ENCODE measurements at regions of chr9 and their contacts with region 1.

Region 1: DNA sequence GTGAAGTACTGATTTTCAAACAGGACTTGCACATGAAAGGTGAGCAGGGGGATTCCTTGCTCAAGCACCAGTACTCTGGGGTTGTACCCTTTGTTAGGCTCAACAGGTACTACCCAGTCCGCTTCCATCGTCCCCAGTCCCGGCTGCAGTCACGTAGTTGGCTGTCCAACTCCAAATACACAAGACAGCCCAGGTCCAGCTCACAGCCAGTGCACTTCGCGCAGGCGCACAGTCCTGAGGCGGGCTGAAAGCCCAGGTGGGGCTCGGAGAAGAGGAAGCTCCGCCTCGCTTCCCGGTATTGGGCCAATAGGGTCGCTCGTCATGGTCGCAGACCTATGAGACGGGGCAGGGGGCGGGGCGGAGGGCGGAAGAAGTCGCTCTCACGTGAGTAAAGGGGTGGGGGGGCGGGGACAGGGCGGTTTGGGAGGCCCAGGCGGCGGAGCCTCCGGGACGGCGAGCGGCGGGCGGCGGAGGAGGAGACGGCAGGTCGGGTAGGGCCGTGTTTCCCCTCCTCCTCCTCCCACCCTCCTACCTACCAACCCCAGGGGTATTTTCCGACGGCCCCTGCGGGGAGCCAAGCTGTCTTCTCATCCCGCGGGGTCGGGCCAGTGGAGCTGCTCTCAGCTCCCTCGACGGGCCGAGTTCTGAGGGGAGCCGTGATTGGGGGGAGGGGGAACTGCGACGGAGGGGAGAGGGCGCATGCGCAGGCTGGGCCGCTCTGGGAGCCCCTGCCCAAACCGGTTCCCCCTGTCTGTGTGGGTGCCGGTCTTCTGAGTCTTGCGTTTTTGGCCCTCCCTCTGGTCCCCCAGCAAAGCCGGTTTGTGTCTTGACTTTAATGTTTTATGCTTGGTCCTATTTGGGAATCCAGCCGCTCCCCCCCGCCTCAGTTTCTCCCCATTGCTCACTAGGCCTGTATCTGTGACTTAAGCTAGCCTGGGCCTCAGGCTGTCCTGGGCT is at the start of gene RABGAP1:
- DNase-seq: peak; percentile 97
- ATAC-seq: peak; percentile 96
- H3K4me3 ChIP-seq: peak within 1 kb of the TSS; percentile 78 to 97 (median 90)
- H3K27ac ChIP-seq: peak within 1 kb of the TSS; percentile 77
- H3K4me1 ChIP-seq: peaks cover 65% of the 10 kb centered on the region
- H3K27me3 ChIP-seq: peaks cover 0 to 3% of the 10 kb centered on the region in 2 experiments; a peak in 1 of 5 replicates
- CTCF ChIP-seq: no peak
- EP300 ChIP-seq: no peak
- POLR2A ChIP-seq: peak; percentile 81 to 82
- RAD21 ChIP-seq: peak; percentile 42
- total RNA-seq, gene RABGAP1: 19.1 and 26.4 TPM in 2 replicates

Region 2: DNA sequence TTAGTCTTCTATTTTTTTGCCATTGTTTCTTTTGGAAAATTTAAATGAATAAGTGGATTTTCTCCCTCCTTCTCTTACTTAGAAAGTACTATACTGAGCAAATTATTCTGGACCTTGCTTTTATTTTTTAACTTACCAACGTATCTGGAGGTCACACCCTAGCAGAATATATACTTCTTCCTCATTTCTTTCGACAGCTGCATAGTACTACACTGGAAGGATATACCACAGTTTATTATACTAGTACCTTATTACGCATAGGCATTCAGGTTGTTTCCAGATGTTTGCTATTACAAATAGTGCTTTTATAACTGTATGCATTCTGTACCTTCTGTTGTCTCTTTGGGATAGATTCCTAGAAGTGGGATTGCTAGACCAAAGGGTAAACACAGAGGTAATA is 52.4 kb before region 1 on chr9:
- CTCF ChIA-PET with region 1: no interaction called
- POLR2A ChIA-PET with region 1: no interaction called
- in situ Hi-C with region 1: no loop called
- intact Hi-C with region 1: no loop called
- DNase-seq: no peak
- ATAC-seq: no peak
- H3K4me3 ChIP-seq: no peak overlapping the region
- H3K27ac ChIP-seq: no peak overlapping the region
- H3K4me1 ChIP-seq: no peaks in the 10 kb centered on the region
- H3K27me3 ChIP-seq: no peaks in the 10 kb centered on the region
- CTCF ChIP-seq: no peak
- EP300 ChIP-seq: no peak
- POLR2A ChIP-seq: no peak
- RAD21 ChIP-seq: no peak

Region 3: GRCh38 chr9:122904823-122905710 is 35.8 kb before region 1 on chr9 and contains the start of gene RC3H2:
- CTCF ChIA-PET with region 1: no interaction called
- POLR2A ChIA-PET with region 1: interaction called, 23 read pairs
- in situ Hi-C with region 1: no loop called
- intact Hi-C with region 1: loop called (anchors 1 kb)
- DNase-seq: peak; percentile 99
- ATAC-seq: peak; percentile 94
- H3K4me3 ChIP-seq: peak within 1 kb of the TSS; percentile 63 to 98 (median 95)
- H3K27ac ChIP-seq: peak within 1 kb of the TSS; percentile 90
- H3K4me1 ChIP-seq: peaks cover 19% of the 10 kb centered on the region
- H3K27me3 ChIP-seq: no peaks in the 10 kb centered on the region; a peak in 1 of 5 replicates
- CTCF ChIP-seq: no peak
- EP300 ChIP-seq: no peak; a peak in 1 of 4 replicates
- POLR2A ChIP-seq: peak; percentile 93 to 96
- RAD21 ChIP-seq: no peak
- total RNA-seq, gene RC3H2: 36.4 and 42.5 TPM in 2 replicates

Region 4: GRCh38 chr9:122912964-122913673 is 27.8 kb before region 1 on chr9 and contains the start of gene ZBTB6:
- CTCF ChIA-PET with region 1: no interaction called
- POLR2A ChIA-PET with region 1: interaction called, 44 read pairs
- in situ Hi-C with region 1: no loop called
- intact Hi-C with region 1: no loop called
- DNase-seq: peak; percentile 83
- ATAC-seq: peak; percentile 99
- H3K4me3 ChIP-seq: peak within 1 kb of the TSS; percentile 79 to 90 (median 81)
- H3K27ac ChIP-seq: peak within 1 kb of the TSS; percentile 93
- H3K4me1 ChIP-seq: peaks cover 11% of the 10 kb centered on the region
- H3K27me3 ChIP-seq: no peaks in the 10 kb centered on the region
- CTCF ChIP-seq: peak; percentile 56
- EP300 ChIP-seq: no peak; a peak in 1 of 4 replicates
- POLR2A ChIP-seq: peak; percentile 61 to 87; a peak in 3 of 4 replicates
- RAD21 ChIP-seq: peak; percentile 36; the same call in 1 of the 2 replicates
- total RNA-seq, gene ZBTB6: 7.1 and 12.1 TPM in 2 replicates

Region 5: DNA sequence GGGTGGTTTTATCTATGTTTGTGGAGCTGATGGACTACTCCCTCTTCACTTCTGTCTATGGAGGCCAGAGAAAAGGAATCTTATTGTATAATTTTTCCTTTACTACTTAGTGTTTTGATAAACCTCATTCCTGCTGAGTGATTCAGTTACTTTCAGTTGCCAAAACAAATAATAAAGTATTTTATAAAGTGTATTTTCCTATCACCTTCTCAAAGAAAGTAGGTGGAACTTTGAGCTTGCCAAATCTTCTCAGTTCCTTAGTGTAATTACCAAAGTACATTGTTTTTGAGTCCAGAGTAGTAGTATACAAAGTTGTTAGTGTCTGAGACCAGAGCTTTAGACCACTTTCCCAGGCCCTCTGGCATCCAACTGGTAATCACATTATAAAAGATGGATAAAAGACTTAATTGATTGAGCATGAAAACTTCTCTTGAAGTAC is 13.4 kb after region 1 on chr9:
- CTCF ChIA-PET with region 1: no interaction called
- POLR2A ChIA-PET with region 1: interaction called, 12 read pairs
- in situ Hi-C with region 1: no loop called
- intact Hi-C with region 1: no loop called
- DNase-seq: no peak
- ATAC-seq: no peak
- H3K4me3 ChIP-seq: no peak overlapping the region
- H3K27ac ChIP-seq: no peak overlapping the region
- H3K4me1 ChIP-seq: no peaks in the 10 kb centered on the region; the same call in 1 of the 2 replicates
- H3K27me3 ChIP-seq: no peaks in the 10 kb centered on the region
- CTCF ChIP-seq: no peak
- EP300 ChIP-seq: no peak
- POLR2A ChIP-seq: no peak
- RAD21 ChIP-seq: no peak

Region 6: GRCh38 chr9:122991370-122991830 is 50.5 kb after region 1 on chr9:
- CTCF ChIA-PET with region 1: no interaction called
- POLR2A ChIA-PET with region 1: interaction called, 4 read pairs
- in situ Hi-C with region 1: no loop called
- intact Hi-C with region 1: loop called (anchors 10 kb)
- DNase-seq: peak; percentile 25
- ATAC-seq: peak; percentile 43; the same call in 1 of the 3 replicates
- H3K4me3 ChIP-seq: no peak overlapping the region
- H3K27ac ChIP-seq: no peak overlapping the region
- H3K4me1 ChIP-seq: no peaks in the 10 kb centered on the region
- H3K27me3 ChIP-seq: no peaks in the 10 kb centered on the region
- CTCF ChIP-seq: peak; percentile 59
- EP300 ChIP-seq: no peak
- POLR2A ChIP-seq: no peak
- RAD21 ChIP-seq: no peak